ENCODE measurements at regions of chr11 and their contacts with region 1.

Region 1: GRCh38 chr11:60485986-60486385 is 6.6 kb upstream of the MS4A12 start:
- DNase-seq: peak in 1 of 2 experiments; percentile 29
- H3K4me3 ChIP-seq: no peak overlapping the region
- H3K27ac ChIP-seq: no peak overlapping the region
- H3K4me1 ChIP-seq: no peaks in the 10 kb centered on the region
- H3K27me3 ChIP-seq: peaks cover 12% of the 10 kb centered on the region; the same call in 1 of the 2 replicates
- CTCF ChIP-seq: peak; percentile 70

Region 2: DNA sequence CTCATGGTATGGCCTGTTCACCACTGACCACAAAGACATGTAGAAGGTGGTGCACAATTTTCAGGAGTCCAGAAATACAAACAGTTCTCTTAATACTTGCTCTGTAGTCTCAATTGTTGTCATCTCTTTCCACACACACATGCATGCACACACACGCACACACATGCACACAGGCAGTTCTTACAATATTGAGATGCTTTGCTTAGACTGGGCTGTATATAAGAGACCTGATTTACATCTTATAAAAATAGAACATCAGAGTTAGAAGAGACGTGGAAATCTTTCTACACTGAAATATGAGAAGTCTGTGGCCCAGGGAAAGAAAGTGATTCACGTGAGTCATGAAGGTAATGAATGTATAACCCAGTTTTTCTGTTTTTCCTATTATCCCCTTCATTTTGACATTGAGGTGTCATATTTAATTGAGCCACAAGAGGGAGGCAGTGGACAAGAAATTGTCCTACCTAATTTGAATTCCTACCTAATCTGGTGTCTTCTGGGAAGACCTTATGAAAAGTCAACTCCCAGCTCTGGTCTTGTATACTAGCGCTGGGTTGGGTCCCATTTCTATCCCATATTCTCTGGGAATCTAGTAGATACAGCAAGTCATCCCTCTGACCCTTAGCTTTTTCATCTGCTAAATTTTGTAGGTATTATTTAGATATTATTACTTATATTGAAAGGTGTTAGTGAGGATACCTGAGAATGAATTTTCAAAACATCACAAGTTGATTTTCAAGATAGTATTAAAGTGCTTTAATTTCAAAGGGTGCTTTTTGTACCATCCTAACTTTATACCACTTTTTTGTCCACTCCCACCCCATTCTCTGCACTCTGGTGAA is 220.4 kb before region 1 on chr11:
- CTCF ChIA-PET with region 1: no interaction called
- POLR2A ChIA-PET with region 1: no interaction called
- intact Hi-C with region 1: loop called (anchors 1 kb)
- DNase-seq: peak in 1 of 2 experiments; percentile 22
- H3K4me3 ChIP-seq: no peak overlapping the region
- H3K27ac ChIP-seq: no peak overlapping the region
- H3K4me1 ChIP-seq: no peaks in the 10 kb centered on the region
- H3K27me3 ChIP-seq: peaks cover 23% of the 10 kb centered on the region; the same call in 1 of the 2 replicates
- CTCF ChIP-seq: peak; percentile 91

Region 3: GRCh38 chr11:60334005-60334620 is 151.9 kb before region 1 on chr11:
- CTCF ChIA-PET with region 1: no interaction called
- POLR2A ChIA-PET with region 1: no interaction called
- intact Hi-C with region 1: loop called (anchors 10 kb)
- DNase-seq: peak in 1 of 2 experiments; percentile 50
- H3K4me3 ChIP-seq: no peak overlapping the region
- H3K27ac ChIP-seq: no peak overlapping the region
- H3K4me1 ChIP-seq: no peaks in the 10 kb centered on the region
- H3K27me3 ChIP-seq: no peaks in the 10 kb centered on the region
- CTCF ChIP-seq: peak; percentile 93

Region 4: GRCh38 chr11:60363542-60364510 is 122.2 kb before region 1 on chr11:
- CTCF ChIA-PET with region 1: no interaction called
- POLR2A ChIA-PET with region 1: no interaction called
- intact Hi-C with region 1: loop called (anchors 10 kb)
- DNase-seq: peak in 1 of 2 experiments; percentile 39
- H3K4me3 ChIP-seq: no peak overlapping the region
- H3K27ac ChIP-seq: no peak overlapping the region
- H3K4me1 ChIP-seq: no peaks in the 10 kb centered on the region
- H3K27me3 ChIP-seq: peaks cover 45% of the 10 kb centered on the region
- CTCF ChIP-seq: peak; percentile 82

Region 5: DNA sequence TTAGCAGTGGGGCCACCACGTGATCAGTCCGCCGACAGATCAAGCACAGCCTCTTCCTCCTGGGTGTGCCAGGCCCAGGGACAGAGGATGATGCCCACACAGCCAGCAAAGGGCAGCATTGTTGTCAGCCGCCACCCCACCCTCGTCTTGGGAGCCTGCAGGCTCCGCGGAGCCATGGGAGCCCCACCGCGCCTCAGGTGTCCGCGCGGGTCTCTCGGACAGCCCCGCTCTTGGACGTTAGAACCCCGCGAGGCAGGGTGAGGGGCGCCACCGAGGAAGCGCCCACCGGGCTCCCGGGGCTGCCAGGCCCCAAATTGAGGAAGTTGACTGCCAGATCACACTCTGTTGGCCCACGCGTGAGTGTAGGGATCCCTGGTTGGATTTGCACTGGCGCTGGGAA is 129.5 kb after region 1 on chr11:
- CTCF ChIA-PET with region 1: no interaction called
- POLR2A ChIA-PET with region 1: no interaction called
- intact Hi-C with region 1: loop called (anchors 10 kb)
- DNase-seq: no peak
- H3K4me3 ChIP-seq: no peak overlapping the region
- H3K27ac ChIP-seq: no peak overlapping the region
- H3K4me1 ChIP-seq: no peaks in the 10 kb centered on the region
- H3K27me3 ChIP-seq: peaks cover 15% of the 10 kb centered on the region; the same call in 1 of the 2 replicates
- CTCF ChIP-seq: no peak

Measured in PC-9 (cell line).